HCT116 (cell line): ENCODE measurements at regions of chr1 and their contacts with region 1.

Region 1: GRCh38 chr1:89483010-89483756 is 41.4 kb upstream of the LRRC8B start:
- DNase-seq: peak; percentile 78
- ATAC-seq: peak; percentile 97
- H3K4me3 ChIP-seq: no peak overlapping the region
- H3K27ac ChIP-seq: no peak overlapping the region
- H3K4me1 ChIP-seq: no peaks in the 10 kb centered on the region
- H3K27me3 ChIP-seq: no peaks in the 10 kb centered on the region
- CTCF ChIP-seq: peak; percentile 61 to 83 (median 81)
- POLR2A ChIP-seq: no peak
- RAD21 ChIP-seq: peak; percentile 82

Region 2: GRCh38 chr1:88726697-88727096 is 756.5 kb before region 1 on chr1:
- CTCF ChIA-PET with region 1: no interaction called
- POLR2A ChIA-PET with region 1: no interaction called
- RAD21 ChIA-PET with region 1: no interaction called
- intact Hi-C with region 1: no loop called
- DNase-seq: no peak
- ATAC-seq: no peak
- H3K4me3 ChIP-seq: no peak overlapping the region
- H3K27ac ChIP-seq: no peak overlapping the region
- H3K4me1 ChIP-seq: no peaks in the 10 kb centered on the region; a peak in 1 of 4 replicates
- H3K27me3 ChIP-seq: no peaks in the 10 kb centered on the region
- CTCF ChIP-seq: no peak
- POLR2A ChIP-seq: no peak
- RAD21 ChIP-seq: no peak

Region 3: GRCh38 chr1:89112871-89113613 is 370.1 kb before region 1 on chr1:
- CTCF ChIA-PET with region 1: no interaction called
- POLR2A ChIA-PET with region 1: no interaction called
- RAD21 ChIA-PET with region 1: no interaction called
- intact Hi-C with region 1: no loop called
- DNase-seq: no peak
- ATAC-seq: no peak
- H3K4me3 ChIP-seq: no peak overlapping the region
- H3K27ac ChIP-seq: no peak overlapping the region
- H3K4me1 ChIP-seq: no peaks in the 10 kb centered on the region
- H3K27me3 ChIP-seq: no peaks in the 10 kb centered on the region
- CTCF ChIP-seq: no peak
- POLR2A ChIP-seq: no peak
- RAD21 ChIP-seq: no peak

Region 4: GRCh38 chr1:89524369-89525168 is 41.4 kb after region 1 on chr1 and contains the start of gene LRRC8B:
- CTCF ChIA-PET with region 1: no interaction called
- POLR2A ChIA-PET with region 1: no interaction called
- RAD21 ChIA-PET with region 1: no interaction called
- intact Hi-C with region 1: no loop called
- DNase-seq: peak; percentile 74
- ATAC-seq: peak; percentile 92
- H3K4me3 ChIP-seq: peak within 1 kb of the TSS; percentile 88 to 94
- H3K27ac ChIP-seq: peak within 1 kb of the TSS; percentile 89
- H3K4me1 ChIP-seq: peaks cover 9 to 19% of the 10 kb centered on the region in 2 experiments; a peak in 3 of 4 replicates
- H3K27me3 ChIP-seq: no peaks in the 10 kb centered on the region
- CTCF ChIP-seq: no peak
- POLR2A ChIP-seq: peak; percentile 58
- RAD21 ChIP-seq: no peak
- total RNA-seq, gene LRRC8B: 17.9 TPM

Region 5: DNA sequence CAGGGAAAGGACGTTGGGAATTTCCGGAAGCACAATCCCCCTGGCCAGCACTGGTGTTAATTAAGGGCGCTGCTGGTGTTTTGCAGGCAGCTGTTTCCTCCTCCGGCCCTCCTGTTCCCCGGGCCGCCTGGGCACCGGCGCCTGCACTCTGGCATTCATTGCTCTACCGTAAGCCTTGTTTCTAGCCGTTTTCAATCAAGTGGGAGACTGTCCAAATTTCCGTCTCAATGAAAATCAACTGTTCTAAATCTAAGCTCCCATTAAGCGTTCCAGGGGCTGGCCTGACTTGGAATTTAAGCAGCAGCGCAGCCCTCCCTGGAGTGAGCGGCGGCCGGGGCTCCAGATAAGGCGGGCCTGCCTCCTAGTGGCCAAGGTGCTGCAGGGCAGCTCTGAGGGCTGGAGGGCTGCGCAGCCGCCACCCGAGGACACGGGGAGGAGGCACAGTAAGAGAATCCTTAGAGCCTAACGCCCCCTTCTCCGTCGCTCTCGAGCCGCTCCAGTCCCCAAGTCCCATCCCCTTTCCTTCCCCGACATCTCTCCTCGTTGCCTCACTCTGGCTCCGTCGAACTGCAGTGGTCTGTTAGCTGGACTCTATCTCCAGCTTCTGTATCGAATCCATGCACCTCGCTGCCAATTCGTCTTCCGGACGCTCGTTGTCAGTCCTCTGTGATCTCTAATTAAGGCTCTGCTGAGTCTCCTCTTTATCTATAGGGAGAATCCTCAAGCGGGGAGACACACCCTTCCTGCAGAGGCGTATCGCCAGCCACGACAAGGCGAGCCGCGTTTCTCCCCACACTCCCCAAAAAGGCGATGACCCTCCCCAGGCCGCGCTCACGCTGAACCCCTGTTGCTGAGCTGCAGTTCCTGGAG is 279.8 kb after region 1 on chr1:
- CTCF ChIA-PET with region 1: interaction called, 36 read pairs
- POLR2A ChIA-PET with region 1: no interaction called
- RAD21 ChIA-PET with region 1: interaction called, 6 to 7 read pairs
- intact Hi-C with region 1: loop called (anchors 1 kb)
- DNase-seq: peak; percentile 28
- ATAC-seq: peak; percentile 100
- H3K4me3 ChIP-seq: no peak overlapping the region; a peak in 1 of 4 replicates
- H3K27ac ChIP-seq: no peak overlapping the region
- H3K4me1 ChIP-seq: peaks cover 0 to 8% of the 10 kb centered on the region in 2 experiments; a peak in 1 of 4 replicates
- H3K27me3 ChIP-seq: no peaks in the 10 kb centered on the region
- CTCF ChIP-seq: peak; percentile 88 to 95 (median 94)
- POLR2A ChIP-seq: no peak
- RAD21 ChIP-seq: peak; percentile 95